ENCODE measurements at regions of chr1 and their contacts with region 1.

Region 1: DNA sequence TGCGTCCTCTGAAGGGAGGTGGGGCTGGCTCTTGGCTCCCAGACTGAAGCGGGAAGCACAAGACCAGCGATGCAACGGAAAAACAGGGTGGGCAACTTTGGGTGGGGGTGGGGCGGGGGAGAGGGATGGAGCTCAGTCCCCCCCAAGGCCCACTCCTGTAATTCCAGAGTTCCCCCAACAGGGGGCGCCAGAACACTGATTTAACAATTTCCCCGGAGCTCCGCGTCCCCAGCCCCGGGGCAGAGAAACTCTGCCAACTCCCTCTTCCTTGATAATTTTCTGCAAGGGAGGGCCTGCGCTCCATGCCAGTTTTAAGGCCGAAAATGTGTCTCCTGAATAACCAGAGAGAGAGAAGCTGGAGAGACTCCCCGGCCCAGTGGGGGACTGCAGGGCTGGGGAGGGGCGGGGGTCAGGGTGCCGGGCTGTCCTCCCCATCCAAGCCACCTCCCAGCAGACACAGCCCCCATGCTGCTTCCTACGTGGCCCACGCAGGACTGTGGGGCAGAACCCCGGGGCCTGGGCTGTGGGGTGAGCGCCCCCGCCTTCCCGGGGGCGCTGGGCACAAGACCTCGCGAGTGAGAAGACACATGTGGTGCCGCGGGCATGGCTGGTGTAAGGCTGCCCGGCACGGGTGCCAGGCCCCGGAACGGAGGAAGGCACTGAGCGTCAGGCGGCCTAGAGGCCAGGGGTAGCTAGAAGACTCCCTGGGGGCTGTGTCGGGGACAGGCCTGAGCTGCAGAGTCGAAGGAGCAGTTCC is 51.4 kb downstream of the KIF21B start:
- DNase-seq: peak; percentile 53
- H3K4me3 ChIP-seq: no peak overlapping the region
- H3K27ac ChIP-seq: no peak overlapping the region
- H3K4me1 ChIP-seq: no peaks in the 10 kb centered on the region
- H3K27me3 ChIP-seq: no peaks in the 10 kb centered on the region
- CTCF ChIP-seq: peak; percentile 69 to 96 (median 82)
- POLR2A ChIP-seq: no peak

Region 2: GRCh38 chr1:201042779-201043461 is 70.8 kb after region 1 on chr1:
- intact Hi-C with region 1: loop called (anchors 5 kb)
- DNase-seq: peak; percentile 62
- H3K4me3 ChIP-seq: no peak overlapping the region
- H3K27ac ChIP-seq: no peak overlapping the region
- H3K4me1 ChIP-seq: no peaks in the 10 kb centered on the region
- H3K27me3 ChIP-seq: no peaks in the 10 kb centered on the region
- CTCF ChIP-seq: peak; percentile 50 to 89 (median 72)
- POLR2A ChIP-seq: no peak

Region 3: GRCh38 chr1:201072158-201072557 is 100.0 kb after region 1 on chr1:
- intact Hi-C with region 1: no loop called
- DNase-seq: no peak
- H3K4me3 ChIP-seq: no peak overlapping the region
- H3K27ac ChIP-seq: no peak overlapping the region
- H3K4me1 ChIP-seq: no peaks in the 10 kb centered on the region
- H3K27me3 ChIP-seq: no peaks in the 10 kb centered on the region
- CTCF ChIP-seq: no peak
- POLR2A ChIP-seq: no peak

Region 4: DNA sequence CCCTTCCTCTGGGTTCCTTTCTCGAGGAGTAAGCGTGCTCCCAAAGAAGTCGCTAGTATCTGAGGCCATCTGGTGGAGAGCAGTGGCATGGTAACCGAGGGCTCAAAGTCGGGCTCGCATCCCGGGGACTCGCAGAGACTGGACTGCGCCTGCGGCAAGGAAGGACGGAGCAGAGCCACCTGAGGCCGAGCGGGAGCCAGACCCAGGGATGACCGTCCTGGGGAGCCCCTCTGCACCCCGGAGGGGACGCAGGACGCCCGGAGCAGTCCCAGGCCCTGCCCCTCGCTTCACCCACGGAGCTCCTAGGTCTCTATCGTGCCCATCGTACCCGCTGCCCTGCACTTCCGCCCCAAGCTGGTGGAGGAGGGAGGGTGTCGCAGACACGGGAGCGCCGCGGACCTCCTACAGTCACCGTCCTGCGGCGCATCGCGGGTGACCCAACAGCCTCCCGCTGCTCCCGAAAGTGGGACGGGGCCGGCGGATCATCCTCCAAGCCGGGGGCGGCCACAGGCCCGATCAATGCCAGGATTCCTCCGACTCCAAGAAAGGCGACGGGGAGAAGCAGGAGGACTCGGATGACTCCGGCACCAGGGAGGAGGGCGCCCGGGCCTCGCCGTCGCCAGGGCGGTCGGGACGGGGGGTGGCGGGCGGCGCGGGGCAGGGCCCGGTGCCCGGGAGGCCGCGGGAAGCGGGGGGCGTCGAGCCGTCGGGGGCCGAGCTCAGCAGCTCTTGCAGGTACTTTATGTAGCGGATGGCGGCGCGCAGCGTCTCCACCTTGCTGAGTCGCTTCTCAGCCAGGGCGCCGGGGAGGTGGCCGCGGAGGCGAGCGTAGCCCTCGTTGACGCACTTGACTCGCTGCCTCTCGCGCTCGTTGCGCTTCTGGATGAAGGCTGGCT is 142.4 kb after region 1 on chr1:
- intact Hi-C with region 1: loop called (anchors 2 kb)
- DNase-seq: peak; percentile 92
- H3K4me3 ChIP-seq: peak overlapping the region; percentile 48 to 51
- H3K27ac ChIP-seq: peak overlapping the region; percentile 52 to 63
- H3K4me1 ChIP-seq: no peaks in the 10 kb centered on the region
- H3K27me3 ChIP-seq: no peaks in the 10 kb centered on the region
- CTCF ChIP-seq: peak; percentile 48 to 94 (median 88)
- POLR2A ChIP-seq: peak; percentile 82

Region 5: GRCh38 chr1:201224666-201225370 is 252.7 kb after region 1 on chr1:
- intact Hi-C with region 1: loop called (anchors 5 kb)
- DNase-seq: no peak
- H3K4me3 ChIP-seq: no peak overlapping the region
- H3K27ac ChIP-seq: no peak overlapping the region
- H3K4me1 ChIP-seq: no peaks in the 10 kb centered on the region
- H3K27me3 ChIP-seq: no peaks in the 10 kb centered on the region
- CTCF ChIP-seq: no peak
- POLR2A ChIP-seq: no peak

Measured in prostate gland (tissue), 2 donors.